Naive thymus-derived CD4-positive, alpha-beta T cell (primary cell): ENCODE measurements at regions of chr3 and their contacts with region 1.

Region 1: GRCh38 chr3:48918388-48919214 is at the start of gene ARIH2:
- DNase-seq: peak; percentile 82 to 89 (median 88)
- ATAC-seq: peak; percentile 88
- H3K4me3 ChIP-seq: peak within 1 kb of the TSS; percentile 94
- H3K4me3 Mint-ChIP-seq: peak within 1 kb of the TSS; percentile 89 to 98 (median 96)
- H3K27ac ChIP-seq: peak within 1 kb of the TSS; percentile 98
- H3K27ac Mint-ChIP-seq: peak within 1 kb of the TSS; percentile 96 to 100 (median 99)
- H3K4me1 ChIP-seq: peaks cover 12 to 16% of the 10 kb centered on the region in 2 donors
- H3K4me1 Mint-ChIP-seq: peaks cover 7 to 31% (median 27%) of the 10 kb centered on the region in 7 donors
- H3K27me3 ChIP-seq: no peaks in the 10 kb centered on the region
- H3K27me3 Mint-ChIP-seq: no peaks in the 10 kb centered on the region
- total RNA-seq, gene ARIH2: 103 to 189 (median 150) TPM

Region 2: GRCh38 chr3:47513125-47513929 is 1405.3 kb before region 1 on chr3 and contains the start of gene ELP6:
- CTCF ChIA-PET with region 1: no interaction called
- POLR2A ChIA-PET with region 1: no interaction called
- intact Hi-C with region 1: loop called in 1 of 2 experiments (anchors 2 kb)
- DNase-seq: peak; percentile 95 to 100 (median 99)
- ATAC-seq: peak; percentile 98
- H3K4me3 ChIP-seq: peak within 1 kb of the TSS; percentile 99
- H3K4me3 Mint-ChIP-seq: peak within 1 kb of the TSS; percentile 92 to 99 (median 97)
- H3K27ac ChIP-seq: peak within 1 kb of the TSS; percentile 95
- H3K27ac Mint-ChIP-seq: peak within 1 kb of the TSS; percentile 96 to 99 (median 98)
- H3K4me1 ChIP-seq: peaks cover 0 to 11% of the 10 kb centered on the region in 2 donors
- H3K4me1 Mint-ChIP-seq: peaks cover 6 to 31% (median 25%) of the 10 kb centered on the region in 7 donors
- H3K27me3 ChIP-seq: no peaks in the 10 kb centered on the region
- H3K27me3 Mint-ChIP-seq: peaks cover 0 to 8% (median 0%) of the 10 kb centered on the region in 5 donors
- total RNA-seq, gene ELP6: 18.8 to 43.1 (median 25.3) TPM

Region 3: GRCh38 chr3:48716982-48717746 is 201.4 kb before region 1 on chr3 and contains the start of gene IP6K2:
- CTCF ChIA-PET with region 1: no interaction called
- POLR2A ChIA-PET with region 1: interaction called, 9 read pairs
- intact Hi-C with region 1: loop called in 1 of 2 experiments (anchors 1 kb)
- DNase-seq: peak; percentile 92 to 99 (median 97)
- ATAC-seq: peak; percentile 100
- H3K4me3 ChIP-seq: peak within 1 kb of the TSS; percentile 99
- H3K4me3 Mint-ChIP-seq: peak within 1 kb of the TSS; percentile 94 to 99 (median 98)
- H3K27ac ChIP-seq: peak within 1 kb of the TSS; percentile 84
- H3K27ac Mint-ChIP-seq: peak within 1 kb of the TSS; percentile 83 to 99 (median 96)
- H3K4me1 ChIP-seq: peaks cover 23 to 29% of the 10 kb centered on the region in 2 donors
- H3K4me1 Mint-ChIP-seq: peaks cover 33 to 46% (median 39%) of the 10 kb centered on the region in 7 donors
- H3K27me3 ChIP-seq: no peaks in the 10 kb centered on the region
- H3K27me3 Mint-ChIP-seq: peaks cover 0 to 22% (median 0%) of the 10 kb centered on the region in 5 donors
- total RNA-seq, gene IP6K2: 72.0 to 94.3 (median 85.9) TPM

Region 4: DNA sequence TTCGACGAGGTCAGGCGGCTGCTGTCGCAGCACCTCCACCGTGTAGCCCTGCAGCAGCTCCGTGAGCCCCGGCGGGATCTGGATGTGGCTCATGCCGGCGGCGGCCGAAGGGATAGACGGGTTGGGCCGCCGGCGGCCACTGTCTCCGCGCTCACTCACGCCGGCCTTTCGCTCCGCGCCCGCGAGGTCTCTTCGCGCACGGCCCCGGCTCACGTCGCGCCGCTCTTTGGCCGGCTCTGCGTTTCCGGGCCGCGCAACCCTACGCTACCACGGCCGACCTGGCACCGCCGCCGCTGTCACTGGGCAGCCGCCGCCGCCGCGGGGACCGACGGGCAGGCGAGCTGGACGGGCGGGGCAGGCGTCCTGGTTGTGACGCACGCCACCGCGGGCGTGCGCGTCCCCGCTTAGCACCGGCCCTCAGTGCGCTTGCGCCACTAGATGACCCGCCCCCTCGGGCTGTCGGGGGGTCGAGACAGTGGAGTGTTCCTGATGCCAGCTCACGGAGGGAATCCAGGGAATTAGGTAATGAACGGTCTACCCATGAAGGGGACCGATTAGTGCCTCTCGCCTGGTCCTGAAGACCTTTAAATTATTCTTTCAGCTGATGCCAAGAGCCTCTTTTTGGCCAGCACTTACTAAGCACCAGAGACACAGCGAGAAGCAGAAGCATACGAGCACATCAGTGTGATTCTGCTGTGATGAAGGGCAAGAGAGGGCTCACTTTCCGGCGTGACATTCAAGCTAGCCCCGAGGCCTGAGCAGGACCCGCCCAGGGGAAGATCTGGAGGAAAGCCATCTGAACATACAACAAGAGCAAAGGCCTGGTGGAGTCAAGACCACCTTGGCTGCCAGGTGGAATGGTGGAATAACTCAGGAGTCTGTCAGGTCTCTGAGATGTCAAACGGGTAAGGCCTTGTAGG is 70.8 kb before region 1 on chr3 and contains the start of gene PRKAR2A:
- CTCF ChIA-PET with region 1: no interaction called
- POLR2A ChIA-PET with region 1: interaction called, 7 read pairs
- intact Hi-C with region 1: loop called (anchors 1 to 2 kb)
- DNase-seq: peak; percentile 51 to 87 (median 67)
- ATAC-seq: peak; percentile 92
- H3K4me3 ChIP-seq: peak within 1 kb of the TSS; percentile 70
- H3K4me3 Mint-ChIP-seq: peak within 1 kb of the TSS; percentile 86 to 93 (median 90)
- H3K27ac ChIP-seq: peak within 1 kb of the TSS; percentile 79
- H3K27ac Mint-ChIP-seq: peak within 1 kb of the TSS; percentile 81 to 98 (median 94)
- H3K4me1 ChIP-seq: peaks cover 15 to 21% of the 10 kb centered on the region in 2 donors
- H3K4me1 Mint-ChIP-seq: peaks cover 12 to 34% (median 28%) of the 10 kb centered on the region in 7 donors
- H3K27me3 ChIP-seq: no peaks in the 10 kb centered on the region
- H3K27me3 Mint-ChIP-seq: no peaks in the 10 kb centered on the region
- total RNA-seq, gene PRKAR2A: 25.9 to 45.1 (median 38.9) TPM

Region 5: DNA sequence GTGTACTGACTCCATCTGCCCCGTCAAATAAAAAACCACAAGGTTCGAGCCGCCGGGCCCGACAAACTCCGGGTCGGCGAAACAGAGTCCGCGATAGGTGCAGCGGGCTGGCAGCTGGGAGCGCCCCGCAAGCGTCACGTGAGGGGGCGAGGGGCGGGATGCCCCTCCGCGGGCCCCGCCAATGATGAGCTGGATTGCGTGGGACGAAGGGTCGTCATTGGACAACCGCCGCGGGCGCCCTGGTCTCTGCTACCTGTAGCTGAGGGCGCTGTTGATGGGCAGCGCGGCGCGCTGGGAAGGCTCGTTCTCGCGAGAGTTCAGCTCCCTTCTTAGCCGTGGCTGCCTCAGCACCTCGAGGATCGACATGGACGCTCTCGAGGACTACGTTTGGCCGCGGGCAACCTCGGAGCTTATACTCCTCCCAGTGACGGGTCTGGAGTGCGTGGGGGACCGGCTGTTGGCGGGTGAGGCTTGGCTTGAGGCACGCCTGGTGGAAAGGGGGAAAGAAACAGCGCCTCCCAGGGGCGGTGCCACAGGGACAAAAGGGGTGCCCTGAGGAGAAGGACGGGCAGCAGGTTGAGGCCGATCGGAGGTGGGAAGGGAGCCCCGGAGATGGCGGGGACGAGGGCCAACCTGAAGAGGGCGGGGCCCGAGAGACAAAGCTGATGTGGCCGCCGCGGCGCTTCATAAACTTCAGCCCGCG is 88.6 kb after region 1 on chr3 and contains the start of gene WDR6:
- CTCF ChIA-PET with region 1: no interaction called
- POLR2A ChIA-PET with region 1: interaction called, 4 read pairs
- intact Hi-C with region 1: loop called in 1 of 2 experiments (anchors 5 kb)
- DNase-seq: peak; percentile 86 to 98 (median 96)
- ATAC-seq: peak; percentile 95
- H3K4me3 ChIP-seq: peak within 1 kb of the TSS; percentile 96
- H3K4me3 Mint-ChIP-seq: peak within 1 kb of the TSS; percentile 94 to 100 (median 98)
- H3K27ac ChIP-seq: peak within 1 kb of the TSS; percentile 90
- H3K27ac Mint-ChIP-seq: peak within 1 kb of the TSS; percentile 95 to 100 (median 98)
- H3K4me1 ChIP-seq: peaks cover 8 to 16% of the 10 kb centered on the region in 2 donors
- H3K4me1 Mint-ChIP-seq: peaks cover 14 to 34% (median 28%) of the 10 kb centered on the region in 7 donors
- H3K27me3 ChIP-seq: no peaks in the 10 kb centered on the region
- H3K27me3 Mint-ChIP-seq: no peaks in the 10 kb centered on the region
- total RNA-seq, gene WDR6: 170 to 335 (median 204) TPM

Region 6: DNA sequence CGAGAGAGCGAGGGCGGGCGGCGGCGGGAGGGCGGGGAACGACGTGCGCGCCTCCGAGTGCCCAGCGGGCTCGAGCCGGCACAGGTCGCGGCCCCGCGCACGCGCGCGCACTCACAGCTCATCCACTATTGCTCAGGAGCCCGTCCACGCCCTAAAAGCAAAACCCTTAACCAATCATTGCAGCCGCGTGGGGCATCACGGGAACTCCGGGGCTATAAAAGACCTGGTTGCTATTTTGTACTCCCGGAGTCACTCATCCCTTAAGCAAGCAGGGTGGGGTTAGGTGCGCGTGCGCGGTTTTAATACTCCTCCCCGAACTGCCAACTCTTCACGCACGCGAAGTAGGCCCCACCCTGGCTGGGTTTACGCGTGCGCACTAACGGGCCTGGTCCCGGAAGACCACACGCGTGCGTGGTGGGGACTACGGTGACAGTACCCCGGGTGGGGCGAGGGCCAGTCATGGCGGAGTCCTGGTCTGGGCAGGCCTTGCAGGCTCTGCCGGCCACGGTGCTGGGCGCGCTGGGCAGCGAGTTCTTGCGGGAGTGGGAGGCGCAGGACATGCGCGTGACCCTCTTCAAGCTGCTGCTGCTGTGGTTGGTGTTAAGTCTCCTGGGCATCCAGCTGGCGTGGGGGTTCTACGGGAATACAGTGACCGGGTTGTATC is 493.5 kb after region 1 on chr3 and contains the starts of genes RHOA and TCTA:
- CTCF ChIA-PET with region 1: no interaction called
- POLR2A ChIA-PET with region 1: no interaction called
- intact Hi-C with region 1: loop called in 1 of 2 experiments (anchors 2 kb)
- DNase-seq: peak; percentile 94 to 100 (median 99)
- ATAC-seq: peak; percentile 90
- H3K4me3 ChIP-seq: peak within 1 kb of the TSS; percentile 86
- H3K4me3 Mint-ChIP-seq: peak within 1 kb of the TSS; percentile 82 to 97 (median 94)
- H3K27ac ChIP-seq: peak within 1 kb of the TSS; percentile 96
- H3K27ac Mint-ChIP-seq: peak within 1 kb of the TSS; percentile 88 to 97 (median 95)
- H3K4me1 ChIP-seq: peaks cover 61 to 65% of the 10 kb centered on the region in 2 donors
- H3K4me1 Mint-ChIP-seq: peaks cover 51 to 82% (median 71%) of the 10 kb centered on the region in 7 donors
- H3K27me3 ChIP-seq: no peaks in the 10 kb centered on the region
- H3K27me3 Mint-ChIP-seq: peaks cover 0 to 2% (median 0%) of the 10 kb centered on the region in 5 donors
- total RNA-seq, gene RHOA: 212 to 411 (median 218) TPM
- total RNA-seq, gene TCTA: 24.9 to 34.5 (median 28.5) TPM